ENCODE measurements at regions of chr9 and their contacts with region 1.

Region 1: DNA sequence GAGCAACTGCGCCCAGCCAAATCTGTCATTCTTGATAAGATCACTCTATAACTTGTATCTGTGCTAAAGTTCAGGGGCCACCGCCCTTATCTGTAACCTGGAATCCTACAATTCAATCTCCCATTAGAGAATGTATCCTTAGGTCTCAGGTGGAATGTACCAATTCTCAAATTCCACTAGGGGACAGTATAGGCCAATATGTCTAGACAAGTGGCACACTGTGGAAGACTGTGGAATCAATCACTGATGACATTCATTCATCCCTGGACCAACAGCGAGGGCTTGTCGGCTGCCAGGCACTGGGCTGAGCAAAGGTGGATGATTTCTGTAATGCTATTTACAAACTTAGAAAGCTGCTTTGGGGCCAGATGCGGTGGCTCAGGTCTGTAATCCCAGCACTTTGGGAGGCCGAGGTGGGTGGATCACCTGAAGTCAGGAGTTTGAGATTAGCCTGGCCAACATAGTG is 28.7 kb upstream of the MEGF9 start:
- DNase-seq: no peak
- H3K4me3 Mint-ChIP-seq: no peak overlapping the region
- H3K27ac Mint-ChIP-seq: no peak overlapping the region
- H3K4me1 Mint-ChIP-seq: no peaks in the 10 kb centered on the region
- H3K27me3 Mint-ChIP-seq: no peaks in the 10 kb centered on the region

Region 2: DNA sequence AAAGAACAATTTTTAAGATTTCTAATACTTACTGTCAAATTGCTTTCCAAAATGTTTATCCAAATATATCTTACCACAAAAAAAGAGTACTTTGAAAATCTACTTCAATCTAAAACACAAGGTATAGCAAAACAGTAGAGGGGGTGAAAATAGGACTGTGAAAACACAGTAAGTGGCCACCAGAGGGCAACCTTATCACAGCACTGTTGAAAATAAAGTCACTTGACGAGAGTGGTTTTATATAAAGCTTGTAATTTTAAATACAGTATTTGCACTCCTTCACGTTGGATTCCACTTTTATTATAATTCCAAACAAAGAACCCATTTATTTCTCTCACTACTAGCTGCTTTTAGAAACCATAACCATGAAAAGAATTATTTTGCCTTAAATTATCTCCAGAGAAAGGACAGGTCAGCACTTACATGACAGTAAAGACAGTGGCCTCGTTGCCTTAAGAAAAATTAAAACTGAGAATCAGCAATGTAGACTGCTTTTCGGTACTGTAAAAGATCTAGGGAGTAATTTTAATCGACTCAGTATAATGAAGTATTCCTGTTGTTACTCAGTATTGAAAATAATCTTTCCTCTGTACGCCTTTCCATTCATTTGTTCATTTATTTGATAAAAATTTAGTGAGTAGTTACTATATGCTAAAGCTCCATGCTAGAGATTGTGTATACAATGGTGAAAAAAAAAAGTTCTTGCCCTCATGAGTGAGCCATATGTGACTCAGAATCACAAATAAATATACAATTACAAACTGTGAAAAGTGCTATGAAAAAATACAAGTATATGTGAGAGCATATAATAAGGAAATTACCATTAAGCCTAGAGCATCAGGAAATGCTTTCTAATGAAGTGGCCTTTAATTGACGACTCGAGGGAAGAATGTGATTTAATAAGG is 123.0 kb before region 1 on chr9:
- CTCF ChIA-PET with region 1: no interaction called
- intact Hi-C with region 1: loop called (anchors 2 kb)
- DNase-seq: peak; percentile 82
- H3K4me3 Mint-ChIP-seq: no peak overlapping the region
- H3K27ac Mint-ChIP-seq: no peak overlapping the region
- H3K4me1 Mint-ChIP-seq: peaks cover 3% of the 10 kb centered on the region
- H3K27me3 Mint-ChIP-seq: no peaks in the 10 kb centered on the region

Region 3: GRCh38 chr9:120710110-120710981 is 32.6 kb before region 1 on chr9:
- CTCF ChIA-PET with region 1: no interaction called
- intact Hi-C with region 1: no loop called
- DNase-seq: peak; percentile 33
- H3K4me3 Mint-ChIP-seq: peak overlapping the region; percentile 68
- H3K27ac Mint-ChIP-seq: peak overlapping the region; percentile 77
- H3K4me1 Mint-ChIP-seq: peaks cover 43% of the 10 kb centered on the region
- H3K27me3 Mint-ChIP-seq: no peaks in the 10 kb centered on the region

Region 4: DNA sequence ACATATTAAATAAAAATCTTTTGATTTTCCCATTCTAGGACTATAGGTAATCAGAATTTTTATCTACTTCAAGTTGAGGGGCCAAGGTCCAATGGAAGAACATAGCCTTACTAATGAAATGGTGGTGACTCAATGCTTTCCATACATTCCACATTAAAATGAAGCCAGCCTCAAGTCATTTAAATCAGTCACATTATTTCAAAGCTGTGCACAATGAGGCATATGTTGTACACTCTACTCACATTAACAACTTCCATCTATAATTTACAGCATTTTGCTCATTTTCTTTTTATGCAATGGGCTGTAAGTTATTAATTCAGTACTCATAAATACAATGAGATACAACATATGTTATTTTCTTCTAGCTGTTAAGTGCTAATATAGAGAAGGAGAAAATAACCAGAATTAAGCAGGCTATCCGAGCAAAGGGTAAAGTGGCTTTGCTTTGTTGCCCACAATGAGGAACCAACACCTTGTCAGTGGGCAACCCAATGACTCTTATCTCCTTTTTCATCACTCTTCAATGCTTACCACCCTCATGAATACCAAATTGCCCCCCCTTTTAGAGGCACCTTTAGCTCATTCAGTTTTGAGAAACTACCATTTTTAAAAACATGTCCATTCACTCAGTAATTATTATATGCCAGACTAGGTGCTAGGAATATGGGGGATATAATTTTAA is 1297.7 kb after region 1 on chr9:
- CTCF ChIA-PET with region 1: no interaction called
- intact Hi-C with region 1: no loop called
- DNase-seq: no peak
- H3K4me3 Mint-ChIP-seq: no peak overlapping the region
- H3K27ac Mint-ChIP-seq: no peak overlapping the region
- H3K4me1 Mint-ChIP-seq: no peaks in the 10 kb centered on the region
- H3K27me3 Mint-ChIP-seq: no peaks in the 10 kb centered on the region

Measured in activated naive CD4-positive, alpha-beta T cell treated with anti-CD3 and anti-CD28 coated beads for 36 hours (primary cell).